ENCODE measurements at regions of chr17 and their contacts with region 1.

Region 1: GRCh38 chr17:47981462-47981861 is 10.5 kb downstream of the CDK5RAP3 start:
- DNase-seq: no peak
- ATAC-seq: no peak

Region 2: GRCh38 chr17:48011405-48012150 is 30.1 kb after region 1 on chr17:
- intact Hi-C with region 1: loop called (anchors 5 kb)
- DNase-seq: no peak
- ATAC-seq: peak; percentile 51

Region 3: GRCh38 chr17:48037036-48037837 is 55.8 kb after region 1 on chr17 and contains the start of gene COPZ2:
- intact Hi-C with region 1: no loop called
- DNase-seq: peak; percentile 78
- ATAC-seq: peak; percentile 84
- total RNA-seq, gene COPZ2: 72.7 TPM